ENCODE measurements at regions of chr1 and their contacts with region 1.

Region 1: GRCh38 chr1:8266436-8267165 is 51.3 kb upstream of the SLC45A1 start:
- DNase-seq: no peak
- H3K4me3 ChIP-seq: no peak overlapping the region
- H3K27ac ChIP-seq: no peak overlapping the region
- H3K4me1 ChIP-seq: peaks cover 11% of the 10 kb centered on the region
- H3K27me3 ChIP-seq: no peaks in the 10 kb centered on the region
- CTCF ChIP-seq: no peak

Region 2: DNA sequence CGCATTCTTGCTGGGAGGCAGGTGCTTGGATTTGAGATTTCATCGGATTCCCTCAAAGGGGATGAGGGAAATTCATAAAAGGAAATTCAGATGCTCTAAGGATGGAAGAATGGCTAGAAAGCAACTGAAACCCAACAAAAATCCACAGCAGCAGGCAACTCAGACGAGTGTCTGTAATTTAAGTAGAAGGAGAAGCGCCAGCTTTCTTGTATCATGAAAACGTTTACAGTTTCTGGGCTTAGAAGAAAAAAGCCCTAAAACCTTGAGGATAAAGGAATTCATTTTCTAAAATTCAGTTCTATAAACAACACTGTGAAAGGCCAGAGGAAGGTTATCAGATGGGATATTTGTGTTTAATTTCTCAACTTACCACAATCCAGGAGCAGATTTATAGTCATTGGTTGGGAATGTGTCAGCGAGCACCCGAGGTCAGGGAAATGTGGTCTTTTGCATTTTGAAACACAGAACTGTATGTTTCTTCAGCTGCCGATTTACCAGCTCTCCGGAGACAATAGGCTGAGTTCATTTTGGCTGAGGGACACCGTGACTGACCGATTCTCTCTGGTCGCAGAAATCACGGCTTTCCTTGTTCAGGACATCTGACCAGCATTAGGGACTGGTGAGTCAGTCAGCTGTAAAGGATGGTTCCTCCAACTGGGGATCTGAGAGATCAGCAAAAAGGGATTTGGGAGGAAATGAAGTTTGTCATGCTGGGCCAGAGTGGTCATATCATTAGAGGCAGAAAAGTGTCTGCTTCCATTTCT is 128.9 kb before region 1 on chr1:
- CTCF ChIA-PET with region 1: interaction called, 11 read pairs
- POLR2A ChIA-PET with region 1: no interaction called
- intact Hi-C with region 1: no loop called
- DNase-seq: no peak
- H3K4me3 ChIP-seq: no peak overlapping the region
- H3K27ac ChIP-seq: no peak overlapping the region
- H3K4me1 ChIP-seq: peaks cover 11% of the 10 kb centered on the region
- H3K27me3 ChIP-seq: no peaks in the 10 kb centered on the region
- CTCF ChIP-seq: no peak

Region 3: GRCh38 chr1:8154621-8155052 is 112.0 kb before region 1 on chr1:
- CTCF ChIA-PET with region 1: no interaction called
- POLR2A ChIA-PET with region 1: interaction called, 24 read pairs
- intact Hi-C with region 1: no loop called
- DNase-seq: no peak
- H3K4me3 ChIP-seq: no peak overlapping the region
- H3K27ac ChIP-seq: no peak overlapping the region
- H3K4me1 ChIP-seq: no peaks in the 10 kb centered on the region
- H3K27me3 ChIP-seq: no peaks in the 10 kb centered on the region
- CTCF ChIP-seq: no peak

Region 4: DNA sequence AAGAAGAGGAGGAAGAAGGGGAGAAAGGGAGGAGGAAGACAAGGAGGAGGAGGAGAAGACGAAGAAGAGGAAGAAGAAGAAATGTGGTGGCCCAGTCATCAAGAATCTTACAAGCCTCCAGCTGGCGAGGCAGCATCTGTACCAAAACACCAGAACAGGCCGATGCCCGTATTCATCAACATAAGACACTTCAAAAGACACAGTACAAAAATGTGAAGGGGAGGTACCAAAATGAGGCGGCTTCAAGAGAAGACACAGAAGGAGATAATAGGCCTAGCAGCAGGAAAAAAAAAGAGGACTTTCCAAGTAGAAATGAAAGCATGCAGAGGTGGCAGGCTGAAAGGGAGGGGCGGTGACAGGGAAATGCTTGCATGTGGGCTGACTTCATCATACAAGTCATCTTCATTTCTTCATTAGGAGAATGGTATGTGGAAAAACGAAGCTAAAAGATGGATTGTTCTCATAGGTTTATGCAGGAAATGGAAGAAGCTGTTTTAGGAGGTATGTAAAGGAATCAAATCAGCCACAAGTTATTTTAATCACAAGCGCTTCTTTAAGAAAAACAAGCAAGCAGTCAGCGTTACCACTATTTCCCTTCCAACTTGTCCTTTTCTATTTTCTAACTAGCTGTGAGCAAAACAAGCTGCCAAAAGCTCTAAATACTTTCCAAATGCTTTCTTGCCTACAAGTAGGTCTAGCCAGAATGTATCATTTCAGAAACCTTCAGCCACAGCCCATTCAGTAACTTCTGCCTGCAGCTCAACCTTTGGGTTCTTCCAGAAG is 243.6 kb after region 1 on chr1:
- CTCF ChIA-PET with region 1: no interaction called
- POLR2A ChIA-PET with region 1: no interaction called
- intact Hi-C with region 1: no loop called
- DNase-seq: peak; percentile 48
- H3K4me3 ChIP-seq: no peak overlapping the region
- H3K27ac ChIP-seq: peak overlapping the region; percentile 41
- H3K4me1 ChIP-seq: peaks cover 6% of the 10 kb centered on the region
- H3K27me3 ChIP-seq: no peaks in the 10 kb centered on the region
- CTCF ChIP-seq: no peak

Measured in A673 (cell line).